CD14-positive monocyte (primary cell): ENCODE measurements at regions of chr3 and their contacts with region 1.

Region 1: DNA sequence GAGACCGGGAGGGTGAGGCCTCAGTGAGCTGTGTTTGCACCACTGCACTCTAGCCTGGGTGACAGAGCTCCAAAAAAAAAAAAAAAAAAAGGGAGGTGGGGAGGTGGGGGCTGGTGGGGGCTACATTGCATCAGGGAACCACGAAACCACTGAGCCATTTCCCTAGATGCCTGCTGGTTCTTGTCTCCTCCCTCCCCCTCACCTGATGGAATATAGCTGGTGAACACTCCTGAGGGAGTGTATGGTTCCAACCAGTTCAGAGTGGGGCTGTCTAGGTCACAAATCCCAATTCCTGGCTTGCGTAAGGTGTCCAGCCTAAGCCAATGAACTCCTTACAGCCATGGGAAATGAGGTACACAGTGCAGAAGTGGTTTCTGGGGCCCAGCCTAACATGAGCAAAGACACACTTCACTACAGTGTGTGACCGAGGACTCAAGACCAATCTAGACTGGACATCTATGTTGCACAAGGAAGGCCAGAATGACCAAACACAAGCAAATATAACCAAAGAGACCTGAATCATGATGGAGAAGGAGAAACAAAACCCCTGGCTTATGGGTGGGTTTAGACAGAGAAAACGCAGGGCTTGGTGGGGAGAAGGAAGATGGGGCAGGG is 39.1 kb upstream of the OSBPL11 start:
- DNase-seq: peak; percentile 29 to 39 (median 29)
- H3K4me3 ChIP-seq: no peak overlapping the region
- H3K4me3 Mint-ChIP-seq: no peak overlapping the region
- H3K27ac ChIP-seq: peak overlapping the region; percentile 94 to 97
- H3K27ac Mint-ChIP-seq: peak overlapping the region; percentile 94 to 99 (median 98)
- H3K4me1 ChIP-seq: peaks cover 24 to 30% of the 10 kb centered on the region in 2 donors
- H3K4me1 Mint-ChIP-seq: peaks cover 29% of the 10 kb centered on the region
- H3K27me3 ChIP-seq: no peaks in the 10 kb centered on the region
- H3K27me3 Mint-ChIP-seq: peaks cover 2 to 5% (median 5%) of the 10 kb centered on the region in 3 donors
- CTCF ChIP-seq: no peak

Region 2: DNA sequence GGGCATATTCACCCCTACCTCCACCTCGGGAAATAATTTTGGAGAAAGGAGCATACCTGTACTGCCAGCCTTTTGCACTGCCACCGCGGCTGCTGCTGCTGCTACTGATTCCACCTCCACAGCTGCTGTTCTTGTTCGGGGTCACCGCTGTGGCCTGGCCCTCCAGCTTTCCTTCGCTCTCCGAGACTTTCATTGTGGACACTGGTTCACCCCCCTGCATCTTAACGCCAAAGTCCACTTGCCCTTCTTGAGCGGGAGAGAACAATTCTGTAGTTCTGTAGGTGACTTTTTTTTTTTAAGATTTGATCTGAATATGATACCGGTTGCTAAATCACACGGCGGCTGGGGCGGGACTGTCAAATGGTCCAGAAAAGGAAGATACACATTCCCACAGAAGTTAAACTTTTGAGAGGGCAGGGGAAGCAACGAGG is 39.8 kb before region 1 on chr3:
- intact Hi-C with region 1: loop called (anchors 1 to 5 kb)
- DNase-seq: peak in 1 of 3 donors; percentile 4
- H3K4me3 ChIP-seq: peak overlapping the region; percentile 79 to 100 (median 99)
- H3K4me3 Mint-ChIP-seq: peak overlapping the region; percentile 96 to 99
- H3K27ac ChIP-seq: peak overlapping the region; percentile 91 to 94
- H3K27ac Mint-ChIP-seq: peak overlapping the region; percentile 94 to 99 (median 97)
- H3K4me1 ChIP-seq: peaks cover 39 to 51% of the 10 kb centered on the region in 2 donors
- H3K4me1 Mint-ChIP-seq: peaks cover 34% of the 10 kb centered on the region
- H3K27me3 ChIP-seq: no peaks in the 10 kb centered on the region
- H3K27me3 Mint-ChIP-seq: peaks cover 0 to 3% (median 1%) of the 10 kb centered on the region in 3 donors
- CTCF ChIP-seq: no peak